Ascending aorta (tissue), 2 donors: ENCODE measurements at regions of chr17 and their contacts with region 1.

Region 1: DNA sequence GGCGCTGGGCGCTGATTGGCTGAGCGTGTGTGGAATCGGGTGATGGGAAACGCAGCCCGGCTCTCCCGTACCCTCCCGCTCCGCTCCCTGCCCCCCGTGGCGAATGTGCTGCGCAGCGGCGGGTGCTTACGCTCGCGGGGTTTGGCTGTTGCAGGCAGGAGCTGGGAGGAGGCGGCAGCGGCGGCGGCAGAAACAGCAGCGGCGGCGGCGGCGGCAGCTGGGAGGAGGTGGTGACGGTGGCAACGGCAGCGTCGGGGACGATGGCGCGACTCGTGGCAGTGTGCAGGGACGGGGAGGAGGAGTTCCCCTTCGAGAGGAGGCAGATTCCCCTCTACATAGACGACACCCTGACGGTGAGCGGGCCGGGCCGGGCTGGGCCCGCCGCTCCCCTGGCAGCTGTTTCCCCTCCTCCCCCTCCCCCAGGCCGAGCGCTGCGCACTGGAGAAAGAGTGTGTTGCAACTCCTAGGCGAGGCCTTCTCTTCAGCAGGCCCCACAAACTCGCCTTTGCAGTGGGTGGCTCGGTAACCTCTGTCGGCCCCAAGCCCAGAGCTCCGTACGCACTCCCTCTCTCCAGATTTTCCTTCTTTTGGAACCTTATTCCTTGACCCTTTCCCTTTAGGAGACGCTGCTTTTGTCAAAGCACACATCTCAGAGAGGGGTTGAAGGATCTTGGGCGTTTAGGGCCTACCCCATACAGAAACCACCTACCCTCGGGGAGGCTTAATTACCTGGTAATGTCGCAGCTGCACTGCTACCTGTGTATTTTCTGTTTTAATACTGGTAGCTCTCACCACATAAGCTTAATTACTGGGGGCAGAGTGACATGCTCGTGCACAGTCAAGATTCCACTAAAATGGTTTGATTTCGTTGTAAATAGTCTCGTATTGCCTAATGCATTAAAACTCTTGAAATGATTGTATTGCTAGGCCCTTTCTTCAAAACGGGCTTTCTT is 1.0 kb downstream of the GGNBP2 start:
- DNase-seq: peak; percentile 94 to 98
- H3K4me3 ChIP-seq: peak overlapping the region; percentile 95 to 98
- H3K27ac ChIP-seq: peak overlapping the region; percentile 99 to 100
- H3K4me1 ChIP-seq: peaks cover 16 to 35% of the 10 kb centered on the region in 2 donors
- H3K27me3 ChIP-seq: no peaks in the 10 kb centered on the region
- CTCF ChIP-seq: no peak

Region 2: GRCh38 chr17:35713069-35713728 is 832.5 kb before region 1 on chr17:
- intact Hi-C with region 1: no loop called
- DNase-seq: peak; percentile 37 to 91
- H3K4me3 ChIP-seq: peak overlapping the region in 1 of 2 donors; percentile 14
- H3K27ac ChIP-seq: peak overlapping the region; percentile 74 to 85
- H3K4me1 ChIP-seq: peaks cover 12 to 41% of the 10 kb centered on the region in 2 donors
- H3K27me3 ChIP-seq: no peaks in the 10 kb centered on the region
- CTCF ChIP-seq: no peak

Region 3: DNA sequence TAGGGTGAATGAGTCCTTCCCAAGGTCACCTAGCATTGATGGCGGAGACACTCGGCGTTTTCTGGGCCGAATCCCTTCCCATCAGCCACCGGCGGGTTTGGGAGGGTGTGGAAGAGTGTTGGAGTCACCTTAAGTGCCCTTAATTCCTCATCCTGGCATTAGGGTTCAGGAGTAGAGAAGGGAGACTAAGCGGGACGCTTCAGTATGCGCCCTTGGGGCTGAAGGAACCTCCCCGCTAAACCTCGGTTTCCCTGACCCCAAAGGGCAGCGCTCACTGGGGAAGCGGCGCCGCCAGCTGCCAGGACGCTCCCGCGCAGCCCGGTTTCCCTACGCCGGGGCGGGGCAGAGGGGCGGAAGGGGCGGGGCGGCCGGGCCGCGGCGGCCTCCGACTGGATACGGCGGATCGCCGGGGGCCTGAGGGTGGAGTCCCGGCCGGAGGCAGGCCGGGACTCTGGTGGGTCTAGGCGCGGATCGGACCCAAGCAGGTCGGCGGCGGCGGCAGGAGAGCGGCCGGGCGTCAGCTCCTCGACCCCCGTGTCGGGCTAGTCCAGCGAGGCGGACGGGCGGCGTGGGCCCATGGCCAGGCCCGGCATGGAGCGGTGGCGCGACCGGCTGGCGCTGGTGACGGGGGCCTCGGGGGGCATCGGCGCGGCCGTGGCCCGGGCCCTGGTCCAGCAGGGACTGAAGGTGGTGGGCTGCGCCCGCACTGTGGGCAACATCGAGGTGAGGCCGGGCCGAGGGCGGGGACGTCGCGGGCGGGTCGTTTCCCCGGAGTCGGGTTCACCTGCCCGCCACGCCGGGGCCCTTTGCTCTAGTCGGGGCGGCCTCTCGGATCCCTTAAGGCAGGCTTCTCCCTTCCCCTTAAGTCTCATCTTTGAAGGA is 45.9 kb after region 1 on chr17 and contains the start of gene DHRS11:
- intact Hi-C with region 1: loop called (anchors 2 kb)
- DNase-seq: peak in 1 of 2 donors; percentile 89
- H3K4me3 ChIP-seq: peak within 1 kb of the TSS; percentile 74 to 95
- H3K27ac ChIP-seq: peak within 1 kb of the TSS; percentile 11 to 29
- H3K4me1 ChIP-seq: peaks cover 0 to 7% of the 10 kb centered on the region in 2 donors
- H3K27me3 ChIP-seq: no peaks in the 10 kb centered on the region
- CTCF ChIP-seq: no peak
- total RNA-seq, gene DHRS11: 11.8 TPM